ENCODE measurements at regions of chr2 and their contacts with region 1.

Region 1: GRCh38 chr2:107418708-107419107 is 408.0 kb upstream of the RGPD4 start:
- DNase-seq: no peak
- H3K4me3 ChIP-seq: no peak overlapping the region
- H3K27ac ChIP-seq: no peak overlapping the region
- H3K4me1 ChIP-seq: no peaks in the 10 kb centered on the region
- H3K27me3 ChIP-seq: no peaks in the 10 kb centered on the region
- CTCF ChIP-seq: no peak
- EP300 ChIP-seq: no peak
- POLR2A ChIP-seq: no peak

Region 2: DNA sequence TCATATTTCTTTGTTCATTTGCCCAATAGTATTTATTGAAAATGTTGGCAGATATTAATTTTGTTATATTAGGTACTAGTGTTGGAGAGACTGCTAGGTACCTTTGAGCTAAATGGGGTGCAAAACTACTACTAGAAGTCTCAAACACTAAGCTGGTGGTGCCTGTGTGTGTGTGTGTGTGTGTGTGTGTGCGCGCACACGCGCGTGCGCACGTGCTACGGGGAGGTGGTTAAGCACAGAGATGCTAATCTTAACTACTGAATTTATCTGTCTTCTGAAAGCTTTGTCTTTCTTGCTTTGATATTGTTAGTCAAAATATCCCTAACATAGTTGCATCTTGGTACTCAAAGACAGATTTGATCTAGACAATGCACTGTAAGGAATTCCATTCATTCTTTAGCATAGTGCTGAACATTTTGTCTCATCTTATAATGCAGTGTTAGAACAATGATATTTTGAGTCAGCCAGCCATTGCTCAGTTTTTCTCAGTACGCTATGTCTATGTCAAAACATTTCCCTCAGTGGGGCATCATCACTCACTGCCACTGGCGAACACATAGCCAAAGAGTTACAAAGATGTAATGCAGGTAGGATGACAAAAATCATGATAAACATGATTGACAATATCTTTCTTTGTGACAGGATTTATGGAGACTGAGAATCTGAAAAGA is 12.0 kb after region 1 on chr2:
- in situ Hi-C with region 1: no loop called
- intact Hi-C with region 1: loop called (anchors 1 kb)
- DNase-seq: no peak
- H3K4me3 ChIP-seq: no peak overlapping the region
- H3K27ac ChIP-seq: no peak overlapping the region
- H3K4me1 ChIP-seq: no peaks in the 10 kb centered on the region
- H3K27me3 ChIP-seq: no peaks in the 10 kb centered on the region
- CTCF ChIP-seq: no peak
- EP300 ChIP-seq: no peak
- POLR2A ChIP-seq: no peak

Measured in transverse colon (tissue), 4 donors.